ENCODE measurements at regions of chr15 and their contacts with region 1.

Region 1: DNA sequence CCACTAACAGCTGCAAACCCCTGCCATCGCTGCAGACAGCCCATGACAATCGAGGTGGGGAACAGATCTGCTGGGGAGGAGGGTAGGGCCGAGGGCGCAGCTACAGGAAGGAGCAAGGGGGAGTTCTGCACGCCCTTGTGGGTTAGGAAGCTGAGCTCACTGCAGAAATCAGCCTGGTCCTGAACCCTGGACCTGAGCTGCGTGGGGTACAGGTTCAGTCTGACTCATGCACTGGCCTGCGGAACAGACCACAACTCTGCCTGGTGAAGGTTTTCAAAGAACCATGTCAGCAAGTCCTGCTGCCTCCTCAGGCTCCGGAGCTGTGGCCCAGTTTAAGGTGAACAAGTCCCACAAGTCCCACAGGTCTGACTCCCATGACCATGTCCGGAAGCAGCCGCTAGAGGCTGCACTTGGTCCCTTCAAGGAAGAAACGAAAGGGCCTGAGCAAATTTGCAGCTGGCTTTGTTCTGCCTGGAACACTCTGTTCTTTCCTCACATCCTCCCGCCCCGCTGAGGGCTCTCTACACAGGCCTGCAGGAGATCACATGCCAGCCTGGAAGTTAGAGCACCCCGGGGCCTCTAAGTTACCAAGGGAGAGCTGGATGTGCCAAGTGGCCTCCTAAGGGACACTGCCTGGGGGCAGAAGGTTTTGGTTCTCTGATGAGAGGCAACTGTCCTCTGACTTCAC is 49.4 kb upstream of the AKAP13 start:
- DNase-seq: peak; percentile 93
- H3K4me3 ChIP-seq: no peak overlapping the region
- H3K27ac ChIP-seq: peak overlapping the region; percentile 61
- H3K4me1 ChIP-seq: peaks cover 20% of the 10 kb centered on the region
- H3K27me3 ChIP-seq: no peaks in the 10 kb centered on the region
- CTCF ChIP-seq: peak; percentile 96 to 100

Region 2: DNA sequence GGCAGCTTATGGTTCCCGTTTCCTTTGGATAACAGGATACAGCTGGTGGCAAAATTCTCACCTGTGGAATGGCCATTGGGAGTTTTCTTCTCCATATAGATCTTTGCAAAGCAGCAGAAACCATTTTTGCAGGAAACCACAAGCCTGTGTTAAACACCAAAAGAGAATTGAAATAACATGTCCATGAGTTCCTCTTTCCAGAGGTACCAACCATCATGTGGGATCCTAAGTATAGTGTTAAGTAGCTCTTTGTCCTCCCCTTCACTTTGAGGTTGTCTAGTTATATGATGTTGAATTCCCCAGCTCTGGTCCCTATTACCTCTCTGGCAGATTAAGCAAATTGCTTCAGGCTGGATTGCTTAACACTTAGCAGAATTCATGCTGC is 144.3 kb after region 1 on chr15:
- CTCF ChIA-PET with region 1: interaction called, 11 read pairs
- dilution Hi-C with region 1: no loop called
- in situ Hi-C with region 1: loop called in 1 of 2 experiments (anchors 10 kb)
- intact Hi-C with region 1: no loop called
- DNase-seq: no peak
- H3K4me3 ChIP-seq: no peak overlapping the region
- H3K27ac ChIP-seq: no peak overlapping the region
- H3K4me1 ChIP-seq: peaks cover 68% of the 10 kb centered on the region
- H3K27me3 ChIP-seq: no peaks in the 10 kb centered on the region
- CTCF ChIP-seq: no peak

Region 3: DNA sequence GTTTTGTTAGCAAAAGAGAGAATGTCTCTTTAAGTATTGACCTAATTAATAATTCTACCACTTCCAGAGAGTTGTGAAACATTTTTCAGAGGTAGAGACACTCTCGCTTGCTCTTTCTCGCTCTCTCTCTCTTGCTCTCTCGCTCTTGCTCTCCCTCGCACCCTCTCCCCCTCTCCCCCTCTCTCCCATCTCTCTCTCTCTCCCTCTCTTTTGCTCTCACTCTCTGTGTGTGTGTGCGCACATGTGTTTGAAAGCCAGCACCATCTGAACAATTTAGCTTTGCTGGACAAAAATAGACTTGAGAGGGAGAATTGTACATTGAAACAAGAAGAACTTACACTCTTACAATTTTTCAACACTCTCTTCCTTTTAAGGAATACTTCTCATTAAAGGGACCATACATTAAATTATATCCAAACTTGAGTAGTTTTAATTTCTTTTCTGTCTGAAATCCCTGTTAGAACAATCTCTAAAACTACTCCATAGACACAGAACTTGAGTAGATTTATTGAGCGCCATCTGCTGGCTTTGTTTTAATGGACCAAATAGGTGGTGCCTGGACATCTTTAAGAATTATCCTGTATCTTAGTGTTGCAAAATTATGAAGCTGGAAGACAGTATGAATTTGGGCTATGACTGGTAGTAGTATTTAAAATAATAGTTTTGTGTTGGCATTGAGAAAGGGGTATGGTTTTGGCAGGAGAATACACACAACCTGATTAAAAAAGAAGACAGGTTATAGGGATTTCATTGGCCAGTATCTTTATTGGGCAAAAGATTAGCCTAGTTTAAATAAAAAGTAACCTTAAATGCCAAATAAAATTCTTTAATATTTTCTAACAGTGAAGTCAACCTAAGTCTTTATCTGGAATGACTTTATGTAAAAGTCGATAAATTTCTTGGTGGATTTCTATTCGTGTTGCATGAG is 174.0 kb after region 1 on chr15:
- CTCF ChIA-PET with region 1: interaction called, 3 read pairs
- dilution Hi-C with region 1: no loop called
- in situ Hi-C with region 1: no loop called
- intact Hi-C with region 1: loop called (anchors 1 kb)
- DNase-seq: peak; percentile 52
- H3K4me3 ChIP-seq: no peak overlapping the region
- H3K27ac ChIP-seq: no peak overlapping the region
- H3K4me1 ChIP-seq: no peaks in the 10 kb centered on the region
- H3K27me3 ChIP-seq: no peaks in the 10 kb centered on the region
- CTCF ChIP-seq: peak; percentile 52 to 59